HEK293T (cell line): ENCODE measurements at regions of chr2 and their contacts with region 1.

Region 1: GRCh38 chr2:96336104-96336775 is 674 bp downstream of the NCAPH start:
- DNase-seq: no peak

Region 2: GRCh38 chr2:96267159-96267971 is 68.9 kb before region 1 on chr2:
- CTCF ChIA-PET with region 1: no interaction called
- POLR2A ChIA-PET with region 1: no interaction called
- DNase-seq: peak; percentile 62

Region 3: GRCh38 chr2:96320728-96321622 is 15.3 kb before region 1 on chr2:
- CTCF ChIA-PET with region 1: no interaction called
- POLR2A ChIA-PET with region 1: interaction called, 86 read pairs
- DNase-seq: peak; percentile 31

Region 4: GRCh38 chr2:96374211-96374951 is 38.1 kb after region 1 on chr2:
- CTCF ChIA-PET with region 1: no interaction called
- POLR2A ChIA-PET with region 1: no interaction called
- DNase-seq: no peak